ENCODE measurements at regions of chr1 and their contacts with region 1.

Region 1: GRCh38 chr1:236394905-236395780 is 1.1 kb downstream of the EDARADD start:
- DNase-seq: no peak
- ATAC-seq: peak; percentile 78
- H3K4me3 ChIP-seq: peak overlapping the region; percentile 57
- H3K27ac ChIP-seq: no peak overlapping the region
- H3K4me1 ChIP-seq: 0 out of 2 replicates have a peak, but pooled peaks cover 2% of the 10 kb centered on the region
- H3K27me3 ChIP-seq: peaks cover 0 to 5% of the 10 kb centered on the region in 2 experiments; a peak in 2 of 4 replicates
- CTCF ChIP-seq: no peak
- EP300 ChIP-seq: no peak
- POLR2A ChIP-seq: peak; percentile 56
- RAD21 ChIP-seq: no peak

Region 2: DNA sequence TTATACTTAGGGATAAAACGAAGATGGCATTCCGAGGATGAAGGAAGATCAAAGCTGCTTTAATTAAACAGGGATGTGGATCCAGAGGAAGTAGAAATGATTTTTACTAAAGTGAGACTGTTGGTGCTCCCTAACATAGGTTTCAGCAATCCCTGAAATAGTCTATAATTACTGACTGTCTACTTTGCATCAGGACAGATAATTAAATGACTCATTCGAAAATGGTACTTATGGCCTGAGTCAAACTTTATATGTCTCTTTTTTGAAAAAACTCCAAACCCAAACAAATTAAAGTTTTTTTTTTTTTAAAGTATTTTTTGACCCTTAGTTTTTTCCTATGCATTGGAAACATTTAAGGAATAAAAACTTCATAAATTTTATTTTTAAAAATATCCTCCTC is 618.7 kb before region 1 on chr1:
- CTCF ChIA-PET with region 1: no interaction called
- POLR2A ChIA-PET with region 1: no interaction called
- RAD21 ChIA-PET with region 1: no interaction called
- SMC1A ChIA-PET with region 1: no interaction called
- in situ Hi-C with region 1: no loop called
- intact Hi-C with region 1: no loop called
- DNase-seq: no peak
- ATAC-seq: no peak
- H3K4me3 ChIP-seq: no peak overlapping the region
- H3K27ac ChIP-seq: no peak overlapping the region
- H3K4me1 ChIP-seq: no peaks in the 10 kb centered on the region
- H3K27me3 ChIP-seq: no peaks in the 10 kb centered on the region
- CTCF ChIP-seq: no peak
- EP300 ChIP-seq: no peak
- POLR2A ChIP-seq: no peak
- RAD21 ChIP-seq: no peak

Region 3: DNA sequence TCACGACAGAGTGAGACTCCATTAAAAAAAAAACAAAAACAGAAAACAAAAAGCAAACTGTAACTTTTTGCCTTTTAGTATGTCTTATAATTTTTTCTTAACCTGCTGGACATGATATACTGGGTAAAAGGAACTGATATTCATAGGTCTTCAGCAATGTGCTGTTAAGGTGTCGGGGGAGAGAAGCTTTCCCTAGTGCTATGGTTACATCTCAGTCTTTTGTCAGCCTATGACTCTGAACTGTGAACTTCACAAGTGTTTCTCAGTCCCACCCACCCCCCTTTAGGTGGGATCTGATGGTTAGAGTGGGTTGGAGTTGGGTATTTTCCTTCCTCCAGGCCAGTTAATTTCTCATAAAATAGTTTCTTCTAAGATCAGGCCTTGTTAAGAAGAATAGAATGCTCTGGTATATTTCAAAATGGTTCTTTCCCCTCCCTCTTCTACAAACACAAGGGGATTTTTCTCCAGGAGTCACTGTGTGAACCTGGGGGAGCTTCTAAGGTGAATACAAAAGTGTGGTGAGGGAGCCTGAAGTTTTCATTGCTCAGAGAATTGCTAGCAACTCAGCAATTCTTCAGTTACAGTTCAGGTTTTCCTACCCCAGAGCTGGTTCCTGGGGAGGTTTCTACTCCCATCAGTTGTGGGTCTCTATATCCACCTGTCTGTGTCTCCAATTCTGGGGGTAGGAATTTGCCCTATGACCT is 17.2 kb before region 1 on chr1:
- CTCF ChIA-PET with region 1: interaction called, 6 read pairs
- POLR2A ChIA-PET with region 1: interaction called, 6 read pairs
- RAD21 ChIA-PET with region 1: interaction called, 10 read pairs
- SMC1A ChIA-PET with region 1: interaction called, 8 read pairs
- in situ Hi-C with region 1: no loop called
- intact Hi-C with region 1: no loop called
- DNase-seq: no peak
- ATAC-seq: peak; percentile 82
- H3K4me3 ChIP-seq: no peak overlapping the region
- H3K27ac ChIP-seq: no peak overlapping the region
- H3K4me1 ChIP-seq: no peaks in the 10 kb centered on the region
- H3K27me3 ChIP-seq: no peaks in the 10 kb centered on the region
- CTCF ChIP-seq: no peak
- EP300 ChIP-seq: 0 out of 4 replicates have a peak, but pooled peaks of 1 of the 2 experiments have one; percentile 6
- POLR2A ChIP-seq: no peak
- RAD21 ChIP-seq: no peak

Measured in GM12878 (cell line).